ENCODE measurements at regions of chr19 and their contacts with region 1.

Region 1: GRCh38 chr19:38877781-38878574 is at the start of gene RINL:
- DNase-seq: peak; percentile 45 to 86 (median 73)
- ATAC-seq: peak; percentile 96
- H3K4me3 ChIP-seq: peak within 1 kb of the TSS; percentile 58
- H3K4me3 Mint-ChIP-seq: peak within 1 kb of the TSS; percentile 91
- H3K27ac ChIP-seq: peak within 1 kb of the TSS; percentile 90 to 96
- H3K27ac Mint-ChIP-seq: peak within 1 kb of the TSS; percentile 97
- H3K4me1 ChIP-seq: peaks cover 55% of the 10 kb centered on the region
- H3K4me1 Mint-ChIP-seq: peaks cover 38% of the 10 kb centered on the region
- H3K27me3 ChIP-seq: no peaks in the 10 kb centered on the region
- H3K27me3 Mint-ChIP-seq: no peaks in the 10 kb centered on the region
- CTCF ChIP-seq: no peak
- total RNA-seq, gene RINL: 19.5 to 21.3 TPM

Region 2: DNA sequence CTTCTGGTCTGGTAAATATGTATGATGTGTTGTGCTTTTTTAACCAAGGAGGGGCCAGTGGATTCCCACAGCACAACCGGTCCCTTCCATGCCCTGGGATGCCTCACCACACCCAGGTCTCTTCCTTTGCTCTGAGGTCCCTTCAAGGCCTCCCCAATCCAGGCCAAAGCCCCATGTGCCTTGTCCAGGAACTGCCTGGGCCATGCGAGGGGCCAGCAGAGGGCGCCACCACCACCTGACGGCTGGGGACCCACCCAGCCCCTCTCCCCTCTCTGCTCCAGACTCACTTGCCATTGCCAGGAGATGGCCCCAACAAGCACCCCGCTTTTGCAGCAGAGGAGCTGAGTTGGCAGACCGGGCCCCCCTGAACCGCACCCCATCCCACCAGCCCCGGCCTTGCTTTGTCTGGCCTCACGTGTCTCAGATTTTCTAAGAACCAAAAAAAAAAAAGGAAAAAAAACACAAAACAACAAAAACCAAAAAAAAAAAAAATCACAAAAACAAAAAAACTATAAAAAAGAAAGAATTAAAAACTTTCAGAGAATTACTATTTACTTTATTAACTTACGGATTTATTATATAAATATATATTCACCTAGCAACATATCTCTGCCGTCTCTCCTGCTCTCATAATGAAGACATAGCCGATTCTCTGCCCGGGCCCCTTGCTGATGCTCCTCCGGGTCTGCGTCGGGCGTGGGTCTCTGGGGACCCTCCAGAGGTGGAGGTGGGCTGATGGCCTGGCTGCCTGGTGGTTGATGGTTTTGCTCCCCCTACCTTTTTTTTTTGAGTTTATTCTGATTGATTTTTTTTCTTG is 148.1 kb before region 1 on chr19:
- CTCF ChIA-PET with region 1: no interaction called
- POLR2A ChIA-PET with region 1: no interaction called
- intact Hi-C with region 1: loop called in 1 of 2 experiments (anchors 5 kb)
- DNase-seq: peak; percentile 67 to 86 (median 72)
- ATAC-seq: peak; percentile 75
- H3K4me3 ChIP-seq: no peak overlapping the region
- H3K4me3 Mint-ChIP-seq: peak overlapping the region; percentile 30
- H3K27ac ChIP-seq: no peak overlapping the region
- H3K27ac Mint-ChIP-seq: peak overlapping the region; percentile 36
- H3K4me1 ChIP-seq: peaks cover 40% of the 10 kb centered on the region
- H3K4me1 Mint-ChIP-seq: peaks cover 15% of the 10 kb centered on the region
- H3K27me3 ChIP-seq: no peaks in the 10 kb centered on the region
- H3K27me3 Mint-ChIP-seq: no peaks in the 10 kb centered on the region
- CTCF ChIP-seq: peak; percentile 88

Region 3: GRCh38 chr19:38812841-38813320 is 65.1 kb before region 1 on chr19 and contains the start of gene LGALS4:
- CTCF ChIA-PET with region 1: no interaction called
- POLR2A ChIA-PET with region 1: no interaction called
- intact Hi-C with region 1: no loop called
- DNase-seq: no peak
- ATAC-seq: no peak
- H3K4me3 ChIP-seq: no peak within 1 kb of the TSS
- H3K4me3 Mint-ChIP-seq: no peak within 1 kb of the TSS
- H3K27ac ChIP-seq: no peak within 1 kb of the TSS
- H3K27ac Mint-ChIP-seq: no peak within 1 kb of the TSS
- H3K4me1 ChIP-seq: no peaks in the 10 kb centered on the region
- H3K4me1 Mint-ChIP-seq: no peaks in the 10 kb centered on the region
- H3K27me3 ChIP-seq: no peaks in the 10 kb centered on the region
- H3K27me3 Mint-ChIP-seq: no peaks in the 10 kb centered on the region
- CTCF ChIP-seq: no peak
- total RNA-seq, gene LGALS4: 2.3 to 3.1 TPM

Region 4: GRCh38 chr19:38831142-38831605 is 46.8 kb before region 1 on chr19:
- CTCF ChIA-PET with region 1: no interaction called
- POLR2A ChIA-PET with region 1: interaction called, 15 read pairs
- intact Hi-C with region 1: no loop called
- DNase-seq: peak in 3 of 14 experiments; percentile 7 to 61 (median 44)
- ATAC-seq: peak; percentile 7
- H3K4me3 ChIP-seq: peak overlapping the region; percentile 73
- H3K4me3 Mint-ChIP-seq: peak overlapping the region; percentile 94
- H3K27ac ChIP-seq: peak overlapping the region; percentile 69 to 74
- H3K27ac Mint-ChIP-seq: peak overlapping the region; percentile 92
- H3K4me1 ChIP-seq: peaks cover 34% of the 10 kb centered on the region
- H3K4me1 Mint-ChIP-seq: peaks cover 39% of the 10 kb centered on the region
- H3K27me3 ChIP-seq: no peaks in the 10 kb centered on the region
- H3K27me3 Mint-ChIP-seq: no peaks in the 10 kb centered on the region
- CTCF ChIP-seq: no peak

Region 5: DNA sequence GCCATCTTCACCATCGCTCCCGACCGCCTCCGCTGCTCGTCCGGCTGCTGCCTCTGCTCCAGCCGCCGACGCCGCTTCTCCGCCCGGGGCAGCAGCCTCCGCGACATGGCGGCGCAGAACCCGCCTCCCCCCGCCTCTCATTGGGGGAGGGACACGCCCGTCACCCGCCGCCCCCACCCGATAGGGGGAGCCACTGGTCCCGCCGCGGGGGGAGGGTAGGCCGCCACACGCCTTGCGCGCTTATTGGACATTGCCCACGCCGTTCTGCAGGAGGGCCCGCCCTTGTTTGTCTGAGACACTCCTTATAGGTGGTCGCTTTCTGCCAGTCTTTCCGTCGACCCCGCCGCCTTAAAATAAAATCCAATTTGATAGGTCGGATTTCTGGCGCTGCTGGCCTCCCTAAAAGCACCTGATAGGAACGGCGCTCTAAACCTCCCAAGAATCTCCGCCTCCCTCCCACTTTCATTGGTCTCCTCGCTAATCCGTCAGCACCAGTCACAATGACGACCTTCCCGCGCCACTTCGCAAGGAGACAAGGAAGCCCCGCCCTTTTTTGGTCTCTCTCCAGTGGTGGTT is 28.0 kb before region 1 on chr19 and contains the start of gene HNRNPL:
- CTCF ChIA-PET with region 1: no interaction called
- POLR2A ChIA-PET with region 1: interaction called, 32 read pairs
- intact Hi-C with region 1: no loop called
- DNase-seq: peak; percentile 98 to 100 (median 99)
- ATAC-seq: peak; percentile 69
- H3K4me3 ChIP-seq: peak within 1 kb of the TSS; percentile 76
- H3K4me3 Mint-ChIP-seq: peak within 1 kb of the TSS; percentile 98
- H3K27ac ChIP-seq: peak within 1 kb of the TSS; percentile 95 to 97
- H3K27ac Mint-ChIP-seq: peak within 1 kb of the TSS; percentile 97
- H3K4me1 ChIP-seq: peaks cover 66% of the 10 kb centered on the region
- H3K4me1 Mint-ChIP-seq: peaks cover 63% of the 10 kb centered on the region
- H3K27me3 ChIP-seq: no peaks in the 10 kb centered on the region
- H3K27me3 Mint-ChIP-seq: no peaks in the 10 kb centered on the region
- CTCF ChIP-seq: peak; percentile 16
- total RNA-seq, gene HNRNPL: 535 to 565 TPM

Region 6: DNA sequence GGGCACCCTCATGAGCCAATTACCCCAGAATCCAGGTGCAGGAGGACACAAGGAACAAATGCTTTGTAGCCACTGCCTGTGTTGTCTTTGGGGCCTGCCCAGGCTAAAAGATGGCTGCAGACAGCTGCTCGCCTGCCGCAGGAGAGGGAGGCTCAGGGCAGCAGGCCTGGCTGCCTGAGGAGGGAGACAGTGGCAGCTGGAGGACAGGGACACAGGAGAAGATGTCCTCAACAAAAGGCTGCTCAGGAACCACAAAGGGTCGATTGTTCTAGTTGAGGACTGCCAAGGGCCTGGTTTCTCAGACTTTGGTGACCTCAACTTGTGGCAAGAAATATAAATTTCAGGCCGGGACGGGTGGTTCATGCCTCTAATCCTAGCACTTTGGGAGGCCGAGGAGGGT is 13.8 kb after region 1 on chr19:
- CTCF ChIA-PET with region 1: interaction called, 12 read pairs
- POLR2A ChIA-PET with region 1: interaction called, 11 read pairs
- intact Hi-C with region 1: no loop called
- DNase-seq: peak in 1 of 14 experiments; percentile 2
- ATAC-seq: no peak
- H3K4me3 ChIP-seq: no peak overlapping the region
- H3K4me3 Mint-ChIP-seq: no peak overlapping the region
- H3K27ac ChIP-seq: no peak overlapping the region
- H3K27ac Mint-ChIP-seq: no peak overlapping the region
- H3K4me1 ChIP-seq: peaks cover 16% of the 10 kb centered on the region
- H3K4me1 Mint-ChIP-seq: peaks cover 6% of the 10 kb centered on the region
- H3K27me3 ChIP-seq: no peaks in the 10 kb centered on the region
- H3K27me3 Mint-ChIP-seq: no peaks in the 10 kb centered on the region
- CTCF ChIP-seq: no peak

Measured in CD4-positive, alpha-beta T cell (primary cell).